ENCODE measurements at regions of chr2 and their contacts with region 1.

Region 1: DNA sequence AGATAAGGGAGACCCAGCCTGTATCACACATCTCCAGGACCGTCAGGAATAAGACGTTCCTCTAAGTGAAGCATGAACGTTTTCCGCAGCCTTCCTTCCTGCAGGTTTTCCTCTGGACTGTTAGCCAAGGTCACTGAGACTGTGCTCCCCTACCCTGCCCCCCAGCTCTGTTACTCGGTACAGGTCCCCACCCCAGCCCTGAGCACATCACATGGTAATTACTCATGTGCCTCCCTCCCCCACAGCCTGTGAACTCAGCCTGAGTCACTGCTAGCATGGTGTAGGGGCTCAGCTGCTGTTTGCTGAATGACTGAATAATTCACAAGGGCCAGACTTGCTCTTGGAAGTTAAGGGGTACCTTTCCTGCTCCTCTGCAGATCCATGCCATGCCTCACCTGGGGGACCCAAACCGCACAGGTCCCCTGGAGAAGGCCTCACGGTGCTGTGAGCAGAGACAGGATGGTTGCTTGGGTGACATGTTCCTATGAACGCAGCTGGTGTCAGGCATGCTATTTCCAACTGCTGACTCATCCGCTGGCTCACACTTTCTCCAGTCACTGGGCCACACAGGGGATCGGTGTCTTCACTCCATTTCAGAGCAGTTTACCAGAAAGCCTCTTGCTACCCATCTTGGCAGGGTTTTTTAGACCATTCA is 88.2 kb downstream of the PLB1 start:
- DNase-seq: peak; percentile 97
- ATAC-seq: peak; percentile 95
- H3K4me3 ChIP-seq: peak overlapping the region; percentile 9; the same call in 1 of the 2 replicates
- H3K27ac ChIP-seq: peak overlapping the region; percentile 82
- H3K4me1 ChIP-seq: peaks cover 13% of the 10 kb centered on the region
- H3K27me3 ChIP-seq: no peaks in the 10 kb centered on the region
- CTCF ChIP-seq: no peak
- POLR2A ChIP-seq: no peak
- RAD21 ChIP-seq: no peak

Region 2: DNA sequence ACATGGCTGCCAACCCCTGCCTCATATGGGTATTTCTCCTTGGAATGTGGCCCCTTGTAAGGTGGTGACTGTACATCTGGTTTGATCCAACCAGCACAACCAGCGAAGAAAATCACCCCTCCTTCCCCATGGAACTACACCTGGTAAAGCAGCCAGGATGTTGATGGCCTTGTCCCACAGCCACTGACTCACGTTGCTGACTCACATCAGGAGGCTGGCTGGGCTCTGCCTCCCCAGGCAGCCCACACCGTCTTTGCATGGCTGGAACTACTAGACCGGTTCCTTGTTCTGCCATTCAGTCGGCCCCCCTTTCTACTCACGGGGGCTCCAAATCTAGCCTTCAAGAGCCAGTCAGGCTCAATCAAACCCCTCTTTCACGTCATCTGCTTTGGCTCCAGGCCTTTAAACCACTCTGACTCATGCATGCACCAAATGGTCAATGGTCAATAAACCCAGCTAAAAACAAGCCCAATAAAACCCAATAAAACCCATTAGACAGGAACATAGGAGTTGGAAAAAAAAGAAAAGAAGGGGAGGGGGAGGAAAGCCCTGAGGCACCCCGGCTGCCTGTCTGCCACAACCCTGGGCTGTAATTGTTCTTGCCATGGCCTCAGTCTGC is 26.7 kb after region 1 on chr2:
- CTCF ChIA-PET with region 1: no interaction called
- POLR2A ChIA-PET with region 1: no interaction called
- dilution Hi-C with region 1: no loop called
- in situ Hi-C with region 1: no loop called
- intact Hi-C with region 1: no loop called
- DNase-seq: peak; percentile 96
- ATAC-seq: peak; percentile 93
- H3K4me3 ChIP-seq: no peak overlapping the region
- H3K27ac ChIP-seq: no peak overlapping the region
- H3K4me1 ChIP-seq: peaks cover 13% of the 10 kb centered on the region
- H3K27me3 ChIP-seq: no peaks in the 10 kb centered on the region
- CTCF ChIP-seq: no peak
- POLR2A ChIP-seq: no peak
- RAD21 ChIP-seq: peak; percentile 38

Region 3: GRCh38 chr2:28801726-28802487 is 217.9 kb after region 1 on chr2:
- CTCF ChIA-PET with region 1: no interaction called
- POLR2A ChIA-PET with region 1: no interaction called
- dilution Hi-C with region 1: no loop called
- in situ Hi-C with region 1: no loop called
- intact Hi-C with region 1: loop called (anchors 5 kb)
- DNase-seq: peak; percentile 64
- ATAC-seq: 0 out of 2 replicates have a peak, but pooled peaks have one; percentile 40
- H3K4me3 ChIP-seq: no peak overlapping the region
- H3K27ac ChIP-seq: peak overlapping the region; percentile 97; the same call in 1 of the 2 replicates
- H3K4me1 ChIP-seq: peaks cover 4% of the 10 kb centered on the region
- H3K27me3 ChIP-seq: no peaks in the 10 kb centered on the region
- CTCF ChIP-seq: no peak
- POLR2A ChIP-seq: no peak
- RAD21 ChIP-seq: no peak